ENCODE measurements at regions of chr2 and their contacts with region 1.

Region 1: DNA sequence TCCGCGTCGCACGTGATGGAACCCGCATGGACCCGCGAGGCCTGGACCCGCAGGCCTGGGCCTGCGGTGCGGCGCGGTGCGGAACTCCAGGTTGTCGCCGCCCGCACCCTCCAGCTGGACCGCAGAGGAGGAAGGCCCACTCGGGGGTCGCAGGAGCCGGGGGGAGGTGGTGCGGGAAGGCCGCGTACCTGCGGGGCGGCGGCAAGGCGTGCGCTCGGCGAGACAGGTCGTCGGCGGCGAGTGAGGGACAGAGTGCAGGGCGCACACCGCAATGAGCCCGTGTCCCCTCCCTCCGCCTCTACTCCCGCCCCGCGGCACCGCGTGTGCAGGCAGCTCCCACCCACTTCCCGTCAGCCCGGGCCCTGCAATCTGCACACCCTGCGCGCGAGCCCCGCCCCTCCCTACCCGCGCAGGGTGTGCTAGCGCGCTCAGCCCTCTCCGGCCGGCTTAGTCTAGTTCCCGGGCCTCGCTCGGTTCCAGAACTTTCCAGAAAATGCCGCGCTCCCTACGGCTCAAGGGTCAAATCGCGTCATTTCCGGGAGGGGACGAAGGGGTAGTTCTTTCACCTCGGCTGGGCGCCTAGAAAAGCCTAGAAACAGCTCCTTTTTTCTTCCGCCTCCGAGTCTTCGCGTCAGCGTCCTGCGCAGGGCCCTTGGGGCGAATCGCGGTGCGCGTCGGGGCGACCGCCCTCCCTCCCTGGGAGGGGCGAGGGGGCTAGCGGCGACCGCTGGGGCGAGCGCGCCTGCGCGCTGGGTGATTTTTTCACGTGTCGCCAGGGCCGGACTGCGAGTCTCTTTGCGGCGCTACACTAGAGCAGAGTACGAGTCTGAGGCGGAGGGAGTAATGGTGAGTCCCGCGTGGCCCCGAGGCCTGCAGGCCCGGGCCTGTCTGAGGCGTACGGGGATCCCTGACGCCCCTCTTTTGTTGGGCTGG is at the starts of genes HSPD1 and HSPE1:
- DNase-seq: peak; percentile 99
- H3K4me3 ChIP-seq: peak within 1 kb of the TSS; percentile 83
- H3K27ac ChIP-seq: peak within 1 kb of the TSS; percentile 77
- H3K4me1 ChIP-seq: peaks cover 55% of the 10 kb centered on the region
- CTCF ChIP-seq: no peak
- total RNA-seq, gene HSPD1: 370 and 405 TPM in 2 replicates
- total RNA-seq, gene HSPE1: 189 and 314 TPM in 2 replicates

Region 2: GRCh38 chr2:197405582-197405981 is 94.3 kb before region 1 on chr2:
- CTCF ChIA-PET with region 1: no interaction called
- POLR2A ChIA-PET with region 1: interaction called, 8 read pairs
- intact Hi-C with region 1: loop called (anchors 5 kb)
- DNase-seq: no peak
- H3K4me3 ChIP-seq: no peak overlapping the region
- H3K27ac ChIP-seq: no peak overlapping the region
- H3K4me1 ChIP-seq: no peaks in the 10 kb centered on the region
- CTCF ChIP-seq: no peak

Region 3: GRCh38 chr2:197453161-197453914 is 46.5 kb before region 1 on chr2 and contains the start of gene COQ10B:
- CTCF ChIA-PET with region 1: no interaction called
- POLR2A ChIA-PET with region 1: interaction called, 7 read pairs
- intact Hi-C with region 1: loop called (anchors 1 kb)
- DNase-seq: peak; percentile 100
- H3K4me3 ChIP-seq: peak within 1 kb of the TSS; percentile 84
- H3K27ac ChIP-seq: peak within 1 kb of the TSS; percentile 72
- H3K4me1 ChIP-seq: peaks cover 17% of the 10 kb centered on the region
- CTCF ChIP-seq: peak; percentile 55; the same call in 1 of the 2 replicates
- total RNA-seq, gene COQ10B: 4.5 and 5.0 TPM in 2 replicates

Region 4: DNA sequence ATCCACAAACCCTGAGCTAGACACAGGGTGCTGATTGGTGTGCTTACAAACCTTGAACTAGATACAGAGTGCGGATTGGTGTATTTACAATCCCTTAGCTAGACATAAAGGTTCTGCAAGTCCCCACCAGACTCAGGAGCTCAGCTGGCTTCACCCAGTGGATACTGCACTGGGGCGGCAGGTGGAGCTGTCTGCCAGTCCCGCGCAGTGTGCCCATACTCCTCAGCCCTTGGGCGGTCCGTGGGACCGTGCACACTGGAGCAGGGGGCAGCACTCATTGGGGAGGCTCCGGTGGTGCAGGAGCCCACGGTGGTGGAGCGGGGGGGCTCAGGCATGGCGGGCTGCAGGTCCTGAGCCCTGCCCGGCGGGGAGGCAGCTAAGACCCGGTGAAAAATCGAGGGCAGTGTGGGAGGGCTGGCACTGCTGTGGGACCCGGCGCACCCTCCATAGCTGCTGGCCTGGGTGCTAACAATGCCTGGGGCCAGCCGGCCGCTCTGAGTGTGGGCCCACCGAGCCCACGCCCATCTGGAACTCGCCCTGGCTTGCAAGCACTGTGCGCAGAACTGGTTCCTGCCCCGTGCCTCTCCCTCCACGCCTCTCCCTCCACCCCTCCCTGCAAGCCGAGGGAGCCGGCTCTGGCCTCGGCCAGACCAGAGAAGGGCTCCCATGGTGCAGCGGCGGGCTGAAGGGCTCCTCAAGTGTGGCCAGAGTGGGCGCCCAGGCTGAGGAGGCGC is 91.6 kb after region 1 on chr2:
- CTCF ChIA-PET with region 1: no interaction called
- POLR2A ChIA-PET with region 1: no interaction called
- intact Hi-C with region 1: no loop called
- DNase-seq: no peak
- H3K4me3 ChIP-seq: no peak overlapping the region
- H3K27ac ChIP-seq: no peak overlapping the region
- H3K4me1 ChIP-seq: no peaks in the 10 kb centered on the region
- CTCF ChIP-seq: no peak